Right ventricle myocardium inferior (tissue), 1 donor: ENCODE measurements at regions of chr1 and their contacts with region 1.

Region 1: GRCh38 chr1:16129921-16130543 is 25.8 kb downstream of the EPHA2 start:
- DNase-seq: peak; percentile 55
- ATAC-seq: no peak

Region 2: GRCh38 chr1:16143566-16144324 is 13.7 kb after region 1 on chr1:
- intact Hi-C with region 1: loop called (anchors 1 kb)
- DNase-seq: no peak
- ATAC-seq: peak; percentile 68